MCF 10A (cell line): ENCODE measurements at regions of chr16 and their contacts with region 1.

Region 1: GRCh38 chr16:9008601-9009260 is 45.0 kb upstream of the USP7 start:
- DNase-seq: peak; percentile 68
- H3K4me3 Mint-ChIP-seq: peak overlapping the region; percentile 22
- H3K27ac Mint-ChIP-seq: no peak overlapping the region
- H3K4me1 Mint-ChIP-seq: no peaks in the 10 kb centered on the region
- H3K27me3 Mint-ChIP-seq: no peaks in the 10 kb centered on the region
- CTCF ChIP-seq: peak; percentile 81

Region 2: GRCh38 chr16:8660841-8661301 is 347.9 kb before region 1 on chr16:
- CTCF ChIA-PET with region 1: interaction called, 5 read pairs
- POLR2A ChIA-PET with region 1: no interaction called
- intact Hi-C with region 1: loop called (anchors 10 kb)
- DNase-seq: peak; percentile 75
- H3K4me3 Mint-ChIP-seq: no peak overlapping the region
- H3K27ac Mint-ChIP-seq: no peak overlapping the region
- H3K4me1 Mint-ChIP-seq: no peaks in the 10 kb centered on the region
- H3K27me3 Mint-ChIP-seq: no peaks in the 10 kb centered on the region
- CTCF ChIP-seq: peak; percentile 82

Region 3: DNA sequence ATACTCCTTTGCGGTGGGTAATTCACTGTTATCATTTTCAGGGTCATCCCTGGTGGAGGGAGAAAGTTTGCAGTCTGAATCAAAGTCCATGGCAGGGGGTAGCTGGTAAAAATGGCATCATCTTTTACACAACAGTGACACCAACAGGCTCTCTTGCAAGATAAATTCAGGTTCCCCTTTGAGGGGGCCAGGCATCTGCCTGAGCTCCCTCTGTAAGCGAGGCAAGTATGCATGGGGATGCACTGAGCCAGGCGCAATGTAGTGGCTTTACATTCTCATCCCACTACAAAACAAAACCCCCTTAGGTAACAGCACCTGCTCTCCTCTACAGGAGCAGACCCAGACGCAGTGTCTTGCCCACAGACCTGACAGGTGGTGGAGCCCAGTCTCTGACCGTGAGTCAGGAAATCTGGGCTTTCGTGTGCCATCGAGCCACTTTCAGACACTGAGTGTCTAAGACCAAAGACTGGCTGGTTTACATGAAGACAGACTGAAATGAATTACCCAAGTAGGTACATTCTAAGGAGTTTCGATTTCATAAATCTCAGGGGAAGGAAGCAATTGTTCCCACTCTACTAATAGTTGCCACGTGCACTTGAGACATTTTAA is 108.9 kb before region 1 on chr16:
- CTCF ChIA-PET with region 1: interaction called, 20 read pairs
- POLR2A ChIA-PET with region 1: no interaction called
- intact Hi-C with region 1: loop called (anchors 1 kb)
- DNase-seq: no peak
- H3K4me3 Mint-ChIP-seq: no peak overlapping the region
- H3K27ac Mint-ChIP-seq: no peak overlapping the region
- H3K4me1 Mint-ChIP-seq: no peaks in the 10 kb centered on the region
- H3K27me3 Mint-ChIP-seq: no peaks in the 10 kb centered on the region
- CTCF ChIP-seq: no peak

Region 4: GRCh38 chr16:8920645-8921346 is 87.9 kb before region 1 on chr16:
- CTCF ChIA-PET with region 1: interaction called, 15 read pairs
- POLR2A ChIA-PET with region 1: no interaction called
- intact Hi-C with region 1: no loop called
- DNase-seq: no peak
- H3K4me3 Mint-ChIP-seq: no peak overlapping the region
- H3K27ac Mint-ChIP-seq: no peak overlapping the region
- H3K4me1 Mint-ChIP-seq: peaks cover 5% of the 10 kb centered on the region
- H3K27me3 Mint-ChIP-seq: no peaks in the 10 kb centered on the region
- CTCF ChIP-seq: no peak

Region 5: DNA sequence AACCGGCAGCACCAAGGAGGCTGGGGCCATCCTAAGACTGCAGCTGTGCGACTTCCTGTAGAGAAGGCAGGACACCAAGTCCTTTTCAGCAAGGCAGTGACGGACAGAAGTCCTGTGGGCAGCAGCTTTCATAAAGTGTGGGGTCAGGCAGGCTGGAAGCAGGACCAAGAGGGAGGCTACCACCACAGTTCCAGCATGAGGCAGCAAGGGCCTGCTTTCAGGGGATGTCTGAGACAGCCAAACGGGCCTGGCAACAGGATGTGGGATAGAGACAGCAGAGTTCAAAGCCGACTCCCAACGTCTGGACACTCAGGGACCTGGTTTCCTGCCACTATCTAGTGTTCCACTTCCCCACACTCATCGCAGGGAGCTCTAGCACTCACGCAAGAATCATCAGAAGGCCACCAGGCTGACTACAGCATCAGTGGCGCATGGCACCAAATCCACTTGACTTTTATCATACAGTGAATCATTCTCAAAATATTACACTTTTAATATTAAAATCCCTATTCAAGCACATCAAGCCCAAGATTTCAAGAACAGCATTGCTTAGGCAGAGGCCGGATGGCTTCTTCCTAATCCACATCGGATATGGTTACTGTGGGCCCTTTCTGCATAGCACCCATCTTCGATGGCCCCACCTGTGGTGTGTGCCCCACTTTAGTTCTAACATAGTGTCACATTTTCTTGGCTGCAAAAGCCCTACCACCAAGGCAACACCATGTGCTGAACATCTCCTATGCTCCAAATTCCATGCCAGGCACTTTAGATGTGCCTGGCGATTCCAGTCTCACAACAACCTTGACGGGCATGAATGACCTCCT is 50.2 kb before region 1 on chr16:
- CTCF ChIA-PET with region 1: interaction called, 15 read pairs
- POLR2A ChIA-PET with region 1: no interaction called
- intact Hi-C with region 1: loop called (anchors 2 kb)
- DNase-seq: no peak
- H3K4me3 Mint-ChIP-seq: no peak overlapping the region
- H3K27ac Mint-ChIP-seq: peak overlapping the region; percentile 23
- H3K4me1 Mint-ChIP-seq: peaks cover 51% of the 10 kb centered on the region
- H3K27me3 Mint-ChIP-seq: no peaks in the 10 kb centered on the region
- CTCF ChIP-seq: no peak

Region 6: DNA sequence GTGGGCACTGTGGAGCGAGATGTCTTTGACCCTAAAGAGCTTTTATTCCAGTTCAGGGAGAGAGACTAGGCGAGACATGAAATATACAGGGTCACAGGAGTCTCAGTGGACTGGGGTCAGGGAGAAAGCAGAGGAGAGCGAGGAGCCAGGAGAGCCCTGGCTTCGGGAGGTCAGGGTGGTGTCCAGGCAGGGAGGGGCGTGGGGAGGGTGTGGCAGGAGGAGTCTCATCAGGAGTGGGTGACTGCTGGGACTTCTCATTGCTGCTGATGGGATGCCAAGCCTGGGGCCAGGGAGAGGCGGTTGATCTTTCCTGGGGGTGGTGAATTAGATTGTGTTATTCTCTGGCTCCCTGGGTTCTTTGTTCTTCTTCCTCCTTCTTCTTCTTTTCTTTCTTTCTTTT is 22.6 kb before region 1 on chr16:
- CTCF ChIA-PET with region 1: interaction called, 20 read pairs
- POLR2A ChIA-PET with region 1: no interaction called
- intact Hi-C with region 1: no loop called
- DNase-seq: no peak
- H3K4me3 Mint-ChIP-seq: no peak overlapping the region
- H3K27ac Mint-ChIP-seq: no peak overlapping the region
- H3K4me1 Mint-ChIP-seq: no peaks in the 10 kb centered on the region
- H3K27me3 Mint-ChIP-seq: no peaks in the 10 kb centered on the region
- CTCF ChIP-seq: no peak

Region 7: GRCh38 chr16:9047686-9048301 is 39.1 kb after region 1 on chr16:
- CTCF ChIA-PET with region 1: interaction called, 13 read pairs
- POLR2A ChIA-PET with region 1: interaction called, 4 read pairs
- intact Hi-C with region 1: no loop called
- DNase-seq: peak; percentile 99
- H3K4me3 Mint-ChIP-seq: no peak overlapping the region
- H3K27ac Mint-ChIP-seq: peak overlapping the region; percentile 72
- H3K4me1 Mint-ChIP-seq: peaks cover 15% of the 10 kb centered on the region
- H3K27me3 Mint-ChIP-seq: no peaks in the 10 kb centered on the region
- CTCF ChIP-seq: no peak

Region 8: DNA sequence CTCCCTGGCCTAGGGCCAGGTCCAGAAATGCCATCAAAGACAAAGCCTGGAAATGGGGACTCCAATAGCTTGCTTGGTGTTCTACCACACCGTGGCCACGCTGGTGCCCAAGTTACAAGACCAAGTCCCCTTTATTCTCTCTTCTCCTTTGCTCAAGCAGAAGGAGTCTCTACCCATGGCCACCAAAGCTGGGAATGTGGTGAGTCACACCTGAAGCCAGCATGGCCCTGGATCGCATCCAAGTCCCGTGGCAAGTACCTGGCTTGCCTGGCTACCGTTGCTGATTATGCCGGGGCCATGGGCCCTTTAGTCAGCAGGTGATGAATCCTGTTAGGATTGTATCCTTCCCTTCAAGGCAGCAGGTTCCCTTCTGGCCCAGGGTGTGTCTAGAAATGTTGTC is 342.7 kb after region 1 on chr16:
- CTCF ChIA-PET with region 1: no interaction called
- POLR2A ChIA-PET with region 1: no interaction called
- intact Hi-C with region 1: no loop called
- DNase-seq: peak; percentile 0
- H3K4me3 Mint-ChIP-seq: no peak overlapping the region
- H3K27ac Mint-ChIP-seq: no peak overlapping the region
- H3K4me1 Mint-ChIP-seq: no peaks in the 10 kb centered on the region
- H3K27me3 Mint-ChIP-seq: no peaks in the 10 kb centered on the region
- CTCF ChIP-seq: no peak

Region 9: DNA sequence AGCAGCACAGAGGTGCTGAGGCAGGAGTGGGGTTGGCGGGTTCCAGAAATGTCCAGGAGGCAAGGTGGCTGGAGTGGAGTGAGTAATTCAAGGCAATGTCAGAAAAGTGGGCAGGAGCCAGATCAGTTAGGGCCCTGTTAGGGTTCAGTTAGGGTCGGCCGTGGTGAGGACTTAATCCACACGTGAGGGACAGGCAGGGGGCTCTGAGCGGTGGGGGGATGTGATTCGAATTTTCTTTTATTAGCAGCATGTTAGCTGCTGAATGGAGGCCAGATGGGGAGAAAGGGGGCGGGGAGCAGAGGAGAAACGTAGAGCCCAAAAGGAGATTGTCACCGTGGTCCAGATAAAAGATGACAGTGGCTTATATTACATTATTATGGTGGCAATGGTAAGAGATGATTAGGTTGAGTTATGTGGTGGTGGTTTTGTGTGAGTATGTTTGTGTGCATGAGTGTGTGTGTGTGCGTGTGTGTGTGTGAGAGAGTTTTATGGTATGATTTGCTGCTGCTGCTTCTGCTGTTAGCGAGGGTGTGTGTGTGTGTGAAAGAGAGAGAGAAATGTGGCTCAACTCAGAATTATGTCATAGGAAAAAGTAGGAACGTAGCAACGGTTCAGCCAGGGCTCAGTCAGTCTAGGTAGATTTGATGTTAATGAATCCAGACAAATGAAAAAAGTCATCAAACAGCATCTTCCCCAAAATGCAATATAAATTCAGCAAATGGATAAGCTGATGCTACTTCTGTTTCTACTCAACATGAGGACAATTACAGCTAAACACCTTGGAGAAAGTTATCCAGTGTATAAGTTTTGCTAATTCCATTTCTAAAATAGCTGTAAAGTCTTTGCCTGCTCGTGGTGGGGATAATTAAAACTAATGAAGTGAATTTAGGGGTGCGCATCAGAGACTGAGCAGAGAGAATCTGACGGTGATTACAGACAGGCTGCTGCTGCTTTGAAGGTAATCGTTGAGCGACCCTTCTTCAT is 473.3 kb after region 1 on chr16:
- CTCF ChIA-PET with region 1: no interaction called
- POLR2A ChIA-PET with region 1: no interaction called
- intact Hi-C with region 1: no loop called
- DNase-seq: no peak
- H3K4me3 Mint-ChIP-seq: no peak overlapping the region
- H3K27ac Mint-ChIP-seq: no peak overlapping the region
- H3K4me1 Mint-ChIP-seq: no peaks in the 10 kb centered on the region
- H3K27me3 Mint-ChIP-seq: no peaks in the 10 kb centered on the region
- CTCF ChIP-seq: no peak